ENCODE measurements at regions of chr13 and their contacts with region 1.

Region 1: DNA sequence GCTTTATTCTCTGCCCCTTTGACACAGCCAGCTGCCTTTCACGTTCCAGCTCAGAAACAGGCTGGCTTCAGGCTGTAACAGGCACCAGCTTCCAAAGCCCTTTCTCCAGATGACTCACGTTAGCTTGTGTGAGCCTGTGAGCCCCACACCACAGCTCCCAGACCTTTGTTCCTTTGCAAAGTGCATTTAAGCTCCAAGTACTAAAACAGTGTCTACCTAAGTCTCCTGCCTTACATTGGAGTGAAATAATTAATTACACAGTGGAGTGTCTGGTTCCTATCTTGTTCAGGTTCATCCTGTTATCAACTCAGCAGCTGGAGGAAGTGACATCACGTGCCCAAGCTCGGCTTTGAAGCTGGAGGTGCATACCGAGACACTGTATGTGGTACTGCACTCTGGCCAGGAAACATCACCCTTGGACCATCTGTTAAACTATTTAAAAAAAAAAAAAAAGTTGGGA is 475.8 kb downstream of the FOXO1 start:
- DNase-seq: peak; percentile 70 to 88 (median 75)
- H3K4me3 ChIP-seq: peak overlapping the region in 1 of 2 donors; percentile 37
- H3K4me3 Mint-ChIP-seq: peak overlapping the region; percentile 11 to 90 (median 83)
- H3K27ac ChIP-seq: peak overlapping the region; percentile 56
- H3K27ac Mint-ChIP-seq: peak overlapping the region; percentile 95 to 98 (median 96)
- H3K4me1 ChIP-seq: peaks cover 68% of the 10 kb centered on the region
- H3K4me1 Mint-ChIP-seq: peaks cover 61 to 79% (median 69%) of the 10 kb centered on the region in 4 donors
- H3K27me3 ChIP-seq: no peaks in the 10 kb centered on the region
- H3K27me3 Mint-ChIP-seq: no peaks in the 10 kb centered on the region

Region 2: GRCh38 chr13:40069173-40070044 is 121.3 kb before region 1 on chr13:
- CTCF ChIA-PET with region 1: interaction called, 24 read pairs
- POLR2A ChIA-PET with region 1: interaction called, 19 read pairs
- intact Hi-C with region 1: loop called (anchors 1 kb)
- DNase-seq: peak; percentile 53 to 71 (median 66)
- H3K4me3 ChIP-seq: no peak overlapping the region
- H3K4me3 Mint-ChIP-seq: peak overlapping the region in 6 of 8 donors; percentile 27 to 67 (median 40)
- H3K27ac ChIP-seq: no peak overlapping the region
- H3K27ac Mint-ChIP-seq: peak overlapping the region in 6 of 7 donors; percentile 6 to 87 (median 72)
- H3K4me1 ChIP-seq: peaks cover 19% of the 10 kb centered on the region
- H3K4me1 Mint-ChIP-seq: peaks cover 11 to 24% (median 16%) of the 10 kb centered on the region in 4 donors
- H3K27me3 ChIP-seq: no peaks in the 10 kb centered on the region
- H3K27me3 Mint-ChIP-seq: no peaks in the 10 kb centered on the region

Region 3: DNA sequence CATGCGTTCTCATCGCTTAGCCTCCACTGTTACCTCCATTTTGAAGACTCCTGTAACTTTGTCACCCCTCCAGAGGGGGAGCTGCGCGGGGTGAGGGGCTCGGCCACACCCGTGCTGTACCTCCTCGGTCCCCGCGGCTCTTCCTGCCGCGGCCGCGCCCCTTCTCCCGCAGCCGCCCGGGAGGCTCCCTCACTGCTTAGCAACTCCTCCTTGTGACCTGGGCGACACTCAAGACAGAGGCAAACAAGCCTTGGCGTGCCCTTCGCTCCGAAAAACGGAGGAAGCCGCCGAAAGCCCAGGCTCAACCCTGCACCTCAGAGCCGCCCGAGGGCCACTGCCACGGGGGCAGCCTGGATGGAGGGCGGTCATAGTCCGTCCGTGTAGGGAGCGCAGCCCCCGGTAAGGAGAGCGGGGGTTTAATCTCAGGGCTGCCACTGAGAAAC is 18.5 kb before region 1 on chr13:
- CTCF ChIA-PET with region 1: interaction called, 3 read pairs
- POLR2A ChIA-PET with region 1: interaction called, 36 read pairs
- intact Hi-C with region 1: no loop called
- DNase-seq: no peak
- H3K4me3 ChIP-seq: no peak overlapping the region
- H3K4me3 Mint-ChIP-seq: no peak overlapping the region
- H3K27ac ChIP-seq: no peak overlapping the region
- H3K27ac Mint-ChIP-seq: no peak overlapping the region
- H3K4me1 ChIP-seq: no peaks in the 10 kb centered on the region
- H3K4me1 Mint-ChIP-seq: peaks cover 7 to 11% (median 9%) of the 10 kb centered on the region in 4 donors
- H3K27me3 ChIP-seq: no peaks in the 10 kb centered on the region
- H3K27me3 Mint-ChIP-seq: no peaks in the 10 kb centered on the region

Region 4: DNA sequence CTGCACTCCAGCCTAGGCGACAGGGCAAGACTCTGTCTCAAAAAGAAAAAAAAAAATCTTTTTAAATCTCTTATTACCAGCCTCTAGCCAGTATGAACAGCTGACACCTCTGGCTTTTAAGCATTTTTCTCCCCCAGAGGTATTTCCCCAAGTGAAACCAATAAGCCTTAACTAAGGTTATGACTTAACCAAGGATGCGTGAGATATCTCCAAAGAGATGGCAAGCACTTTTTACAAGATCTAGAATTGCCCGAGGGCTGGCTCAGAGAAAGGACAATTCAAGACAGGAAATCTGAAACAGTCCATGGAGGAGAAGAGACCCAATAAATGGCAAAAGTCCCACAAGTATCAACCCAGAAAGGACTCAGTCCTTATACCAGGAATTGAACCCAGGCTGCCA is 113.7 kb after region 1 on chr13:
- CTCF ChIA-PET with region 1: interaction called, 3 read pairs
- POLR2A ChIA-PET with region 1: interaction called, 3 read pairs
- intact Hi-C with region 1: loop called (anchors 5 kb)
- DNase-seq: no peak
- H3K4me3 ChIP-seq: no peak overlapping the region
- H3K4me3 Mint-ChIP-seq: no peak overlapping the region
- H3K27ac ChIP-seq: no peak overlapping the region
- H3K27ac Mint-ChIP-seq: no peak overlapping the region
- H3K4me1 ChIP-seq: no peaks in the 10 kb centered on the region
- H3K4me1 Mint-ChIP-seq: peaks cover 0 to 4% (median 1%) of the 10 kb centered on the region in 4 donors
- H3K27me3 ChIP-seq: no peaks in the 10 kb centered on the region
- H3K27me3 Mint-ChIP-seq: no peaks in the 10 kb centered on the region

Region 5: DNA sequence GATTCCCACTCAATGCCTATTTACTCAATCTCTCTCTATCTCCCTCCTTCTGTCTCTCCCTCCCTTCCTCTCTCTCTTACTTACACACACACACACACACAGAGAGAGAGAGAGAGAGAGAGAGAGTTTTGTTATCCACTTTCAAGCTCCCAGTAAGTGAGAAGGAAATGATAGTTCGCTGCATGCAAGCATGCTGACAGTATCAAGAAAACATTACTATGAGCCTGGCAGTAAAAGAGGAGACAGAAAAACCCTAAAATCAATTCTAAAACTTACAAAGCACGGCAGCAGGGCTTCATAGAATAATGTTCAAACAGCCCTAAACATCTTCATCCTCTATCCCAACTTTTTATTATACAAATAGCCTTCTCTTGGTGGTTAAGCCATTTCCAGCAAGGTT is 303.8 kb after region 1 on chr13:
- CTCF ChIA-PET with region 1: interaction called, 4 read pairs
- POLR2A ChIA-PET with region 1: interaction called, 10 read pairs
- intact Hi-C with region 1: no loop called
- DNase-seq: peak in 3 of 5 donors; percentile 37 to 54 (median 49)
- H3K4me3 ChIP-seq: peak overlapping the region in 1 of 2 donors; percentile 33
- H3K4me3 Mint-ChIP-seq: peak overlapping the region; percentile 71 to 92 (median 84)
- H3K27ac ChIP-seq: peak overlapping the region; percentile 38
- H3K27ac Mint-ChIP-seq: peak overlapping the region; percentile 90 to 98 (median 94)
- H3K4me1 ChIP-seq: peaks cover 74% of the 10 kb centered on the region
- H3K4me1 Mint-ChIP-seq: peaks cover 70 to 92% (median 80%) of the 10 kb centered on the region in 4 donors
- H3K27me3 ChIP-seq: no peaks in the 10 kb centered on the region
- H3K27me3 Mint-ChIP-seq: no peaks in the 10 kb centered on the region

Measured in CD4-positive, alpha-beta memory T cell (primary cell).